Prostate gland (tissue), 2 donors: ENCODE measurements at regions of chr20 and their contacts with region 1.

Region 1: GRCh38 chr20:40962730-40963504 is 65.7 kb upstream of the TOP1 start:
- DNase-seq: peak; percentile 61
- H3K4me3 ChIP-seq: no peak overlapping the region
- H3K27ac ChIP-seq: no peak overlapping the region
- H3K4me1 ChIP-seq: no peaks in the 10 kb centered on the region
- H3K27me3 ChIP-seq: no peaks in the 10 kb centered on the region
- CTCF ChIP-seq: peak; percentile 79 to 93 (median 82)
- POLR2A ChIP-seq: no peak

Region 2: GRCh38 chr20:39264506-39265172 is 1698.3 kb before region 1 on chr20:
- intact Hi-C with region 1: loop called (anchors 10 kb)
- DNase-seq: peak; percentile 16
- H3K4me3 ChIP-seq: no peak overlapping the region
- H3K27ac ChIP-seq: no peak overlapping the region
- H3K4me1 ChIP-seq: peaks cover under 1% of the 10 kb centered on the region
- H3K27me3 ChIP-seq: no peaks in the 10 kb centered on the region
- CTCF ChIP-seq: peak in 3 of 4 experiments; percentile 36 to 64 (median 63)
- POLR2A ChIP-seq: no peak

Region 3: DNA sequence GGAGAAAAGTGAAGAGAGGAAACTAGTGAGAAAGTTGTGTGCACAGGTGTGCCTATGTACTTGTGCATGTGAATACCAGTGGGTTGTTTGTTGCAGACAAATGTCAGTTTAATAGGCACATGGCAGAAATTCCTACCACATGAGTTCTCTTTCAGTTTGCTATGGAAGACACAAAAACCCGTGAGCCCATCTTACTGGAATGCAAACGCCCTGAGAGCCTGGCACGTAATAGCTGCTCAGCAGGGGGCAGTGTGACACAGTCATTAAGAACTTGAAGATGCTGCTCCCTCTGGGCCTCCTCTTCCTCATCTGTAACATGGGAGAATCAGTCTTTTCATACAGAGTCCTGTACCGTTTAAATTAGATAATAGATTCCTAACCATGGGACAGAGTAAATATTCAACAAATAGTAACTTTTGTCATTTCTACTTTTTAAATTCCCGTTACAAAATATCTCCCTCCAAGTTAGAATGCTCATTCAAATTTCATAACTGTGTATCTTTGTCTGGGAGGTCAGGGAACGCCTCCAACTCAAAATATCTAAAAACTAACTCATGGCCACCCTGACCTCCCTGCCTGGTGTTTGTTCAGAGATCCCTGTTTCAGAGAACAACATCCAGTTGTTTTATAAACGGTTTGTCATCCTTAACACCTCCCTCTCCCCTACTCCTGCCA is 1076.8 kb before region 1 on chr20:
- intact Hi-C with region 1: loop called (anchors 10 kb)
- DNase-seq: peak; percentile 42
- H3K4me3 ChIP-seq: no peak overlapping the region
- H3K27ac ChIP-seq: no peak overlapping the region
- H3K4me1 ChIP-seq: no peaks in the 10 kb centered on the region
- H3K27me3 ChIP-seq: no peaks in the 10 kb centered on the region
- CTCF ChIP-seq: peak in 3 of 4 experiments; percentile 42 to 62 (median 55)
- POLR2A ChIP-seq: no peak

Region 4: GRCh38 chr20:40314278-40314677 is 648.6 kb before region 1 on chr20:
- intact Hi-C with region 1: no loop called
- DNase-seq: no peak
- H3K4me3 ChIP-seq: no peak overlapping the region
- H3K27ac ChIP-seq: no peak overlapping the region
- H3K4me1 ChIP-seq: no peaks in the 10 kb centered on the region
- H3K27me3 ChIP-seq: no peaks in the 10 kb centered on the region
- CTCF ChIP-seq: no peak
- POLR2A ChIP-seq: no peak

Region 5: DNA sequence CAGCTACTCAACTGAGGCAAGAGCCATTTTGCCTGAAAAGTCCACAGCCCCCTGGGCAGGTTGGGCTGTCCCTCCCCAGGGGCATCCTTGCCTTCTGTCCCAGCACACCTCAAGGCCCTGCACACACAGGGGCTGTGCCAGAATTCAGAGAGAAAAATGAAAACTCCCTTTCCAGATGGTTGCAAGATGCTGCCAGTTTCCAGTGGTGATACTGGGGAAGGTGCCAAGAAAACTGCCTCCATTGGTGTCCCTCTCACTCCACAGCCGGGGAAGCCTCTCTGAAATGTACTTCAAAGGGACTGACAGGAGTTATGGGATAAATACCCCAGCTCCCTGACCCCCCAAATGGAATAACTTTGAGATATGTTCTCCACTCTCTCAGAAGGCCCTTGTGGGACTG is 119.7 kb before region 1 on chr20:
- intact Hi-C with region 1: no loop called
- DNase-seq: no peak
- H3K4me3 ChIP-seq: no peak overlapping the region
- H3K27ac ChIP-seq: no peak overlapping the region
- H3K4me1 ChIP-seq: no peaks in the 10 kb centered on the region
- H3K27me3 ChIP-seq: no peaks in the 10 kb centered on the region
- CTCF ChIP-seq: no peak
- POLR2A ChIP-seq: no peak